OCI-LY7 (cell line): ENCODE measurements at regions of chr13 and their contacts with region 1.

Region 1: GRCh38 chr13:92270990-92271389 is 872.6 kb downstream of the GPC5 start:
- DNase-seq: no peak
- H3K4me3 ChIP-seq: no peak overlapping the region
- H3K27ac ChIP-seq: no peak overlapping the region
- H3K4me1 ChIP-seq: no peaks in the 10 kb centered on the region
- CTCF ChIP-seq: no peak

Region 2: DNA sequence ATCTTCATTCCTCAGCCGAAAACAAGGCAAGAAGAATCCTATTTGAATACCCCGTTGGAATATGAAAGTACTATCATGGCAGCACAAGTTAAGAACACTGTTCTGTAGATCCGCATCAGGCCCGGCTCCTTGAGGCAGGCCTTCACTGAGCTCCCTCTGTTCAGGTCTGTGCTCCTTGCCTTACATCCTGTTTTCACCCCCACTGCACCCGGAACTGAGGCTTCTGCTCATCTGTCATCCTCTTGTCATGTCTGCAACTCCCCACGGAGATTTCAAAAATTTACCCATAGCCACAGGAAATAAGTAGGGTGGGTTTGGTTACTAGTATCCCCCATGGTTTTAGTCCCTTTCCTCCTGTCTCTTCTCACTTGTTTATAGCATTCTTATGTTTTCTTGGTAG is 10.6 kb before region 1 on chr13:
- CTCF ChIA-PET with region 1: no interaction called
- POLR2A ChIA-PET with region 1: interaction called, 19 read pairs
- intact Hi-C with region 1: no loop called
- DNase-seq: peak; percentile 25
- H3K4me3 ChIP-seq: no peak overlapping the region
- H3K27ac ChIP-seq: no peak overlapping the region
- H3K4me1 ChIP-seq: no peaks in the 10 kb centered on the region
- CTCF ChIP-seq: no peak

Region 3: GRCh38 chr13:92297971-92298942 is 27.3 kb after region 1 on chr13:
- CTCF ChIA-PET with region 1: no interaction called
- POLR2A ChIA-PET with region 1: interaction called, 11 read pairs
- intact Hi-C with region 1: no loop called
- DNase-seq: no peak
- H3K4me3 ChIP-seq: no peak overlapping the region
- H3K27ac ChIP-seq: no peak overlapping the region
- H3K4me1 ChIP-seq: no peaks in the 10 kb centered on the region
- CTCF ChIP-seq: no peak

Region 4: GRCh38 chr13:92362717-92363116 is 91.7 kb after region 1 on chr13:
- CTCF ChIA-PET with region 1: no interaction called
- POLR2A ChIA-PET with region 1: no interaction called
- intact Hi-C with region 1: no loop called
- DNase-seq: no peak
- H3K4me3 ChIP-seq: no peak overlapping the region
- H3K27ac ChIP-seq: no peak overlapping the region
- H3K4me1 ChIP-seq: no peaks in the 10 kb centered on the region
- CTCF ChIP-seq: no peak

Region 5: GRCh38 chr13:92530364-92530763 is 259.4 kb after region 1 on chr13:
- CTCF ChIA-PET with region 1: no interaction called
- POLR2A ChIA-PET with region 1: no interaction called
- intact Hi-C with region 1: no loop called
- DNase-seq: no peak
- H3K4me3 ChIP-seq: no peak overlapping the region
- H3K27ac ChIP-seq: no peak overlapping the region
- H3K4me1 ChIP-seq: no peaks in the 10 kb centered on the region
- CTCF ChIP-seq: no peak